WTC11 (cell line): ENCODE measurements at regions of chr10 and their contacts with region 1.

Region 1: GRCh38 chr10:29243750-29244149 is 45.1 kb upstream of the LYZL1 start:
- DNase-seq: peak; percentile 47
- ATAC-seq: peak; percentile 72
- H3K4me3 Mint-ChIP-seq: no peak overlapping the region
- H3K27ac Mint-ChIP-seq: no peak overlapping the region
- H3K4me1 Mint-ChIP-seq: peaks cover 2% of the 10 kb centered on the region; the same call in 1 of the 2 replicates
- H3K27me3 Mint-ChIP-seq: no peaks in the 10 kb centered on the region
- CTCF ChIP-seq: peak; percentile 33

Region 2: DNA sequence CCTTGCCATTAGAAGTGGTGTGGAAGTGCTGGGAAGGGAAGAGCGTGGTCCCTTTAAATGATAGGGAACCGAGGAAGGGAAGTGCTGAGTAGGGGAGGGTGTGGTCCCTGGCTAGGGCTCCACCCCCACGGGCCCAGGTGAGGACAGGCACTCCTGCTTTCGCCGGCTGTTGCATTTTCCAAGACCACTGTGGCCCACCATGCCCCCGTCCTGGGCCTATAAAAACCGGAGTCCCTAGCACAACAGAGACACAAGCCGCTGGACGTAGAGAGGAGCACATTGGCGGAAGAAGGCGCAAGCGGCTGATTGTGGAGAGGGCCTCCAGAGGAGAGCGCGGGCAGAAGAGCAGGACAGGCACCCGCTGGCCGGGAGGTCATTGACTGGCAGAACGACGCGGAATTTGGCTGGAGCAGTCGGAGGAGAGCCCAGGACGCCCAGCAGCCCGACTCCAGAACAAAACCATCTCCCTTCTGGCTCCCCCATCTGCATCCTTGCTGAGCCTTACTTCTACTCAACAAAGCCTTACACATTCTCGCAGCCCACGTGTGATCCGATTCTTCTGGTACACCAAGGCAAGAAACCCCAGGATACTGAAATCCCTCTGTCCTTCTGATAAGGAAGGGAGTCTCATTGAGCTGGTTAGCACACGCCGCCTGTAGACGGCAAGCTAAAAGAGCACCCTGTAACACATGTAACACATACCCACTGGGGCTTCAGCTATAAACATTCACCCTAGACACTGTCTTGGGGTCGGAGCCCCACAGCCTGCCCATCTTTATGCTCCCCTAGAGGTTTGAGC is 101.0 kb before region 1 on chr10:
- CTCF ChIA-PET with region 1: interaction called, 10 read pairs
- POLR2A ChIA-PET with region 1: no interaction called
- DNase-seq: peak; percentile 65
- ATAC-seq: peak; percentile 75
- H3K4me3 Mint-ChIP-seq: peak overlapping the region; percentile 85
- H3K27ac Mint-ChIP-seq: peak overlapping the region; percentile 92
- H3K4me1 Mint-ChIP-seq: peaks cover 66% of the 10 kb centered on the region
- H3K27me3 Mint-ChIP-seq: no peaks in the 10 kb centered on the region
- CTCF ChIP-seq: no peak